Caco-2 (cell line): ENCODE measurements at regions of chr11 and their contacts with region 1.

Region 1: DNA sequence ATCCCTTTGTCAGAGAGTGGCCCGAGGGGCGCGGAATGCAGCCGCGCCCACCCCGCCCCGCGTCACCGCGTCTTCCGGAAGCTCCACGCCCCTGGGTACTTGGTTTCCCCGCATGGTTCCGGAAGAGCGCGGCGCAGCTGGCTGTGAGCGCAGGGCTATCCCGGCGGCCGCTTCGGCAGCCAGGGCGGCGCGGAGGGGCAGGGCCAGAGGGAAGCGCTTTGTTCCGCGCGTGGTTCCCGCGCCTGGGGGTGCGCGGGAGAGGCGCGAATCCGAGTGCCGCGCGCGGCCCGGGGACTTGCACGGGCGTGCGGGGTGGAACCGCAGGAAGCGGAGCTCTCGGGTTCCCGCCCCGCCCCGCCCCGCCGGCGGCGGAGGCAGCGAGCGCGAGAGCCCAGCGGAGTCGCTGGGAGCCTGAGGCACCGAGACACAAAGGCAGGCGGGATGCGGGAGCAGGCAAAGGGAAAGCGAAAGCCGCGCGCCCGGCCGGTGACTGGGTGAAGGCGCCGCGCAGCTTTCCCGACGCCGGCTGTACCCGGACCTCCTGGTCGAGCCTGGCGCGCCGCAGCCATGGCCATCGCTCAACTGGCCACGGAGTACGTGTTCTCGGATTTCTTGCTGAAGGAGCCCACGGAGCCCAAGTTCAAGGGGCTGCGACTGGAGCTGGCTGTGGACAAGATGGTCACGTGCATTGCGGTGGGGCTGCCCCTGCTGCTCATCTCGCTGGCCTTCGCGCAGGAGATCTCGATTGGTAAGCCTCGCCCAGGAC is at the start of gene PANX1:
- DNase-seq: peak; percentile 89 to 93
- H3K4me3 ChIP-seq: peak within 1 kb of the TSS; percentile 70
- H3K4me3 Mint-ChIP-seq: no peak within 1 kb of the TSS
- H3K27ac Mint-ChIP-seq: no peak within 1 kb of the TSS
- H3K4me1 ChIP-seq: peaks cover 18% of the 10 kb centered on the region
- H3K4me1 Mint-ChIP-seq: peaks cover 15% of the 10 kb centered on the region
- H3K27me3 ChIP-seq: no peaks in the 10 kb centered on the region
- H3K27me3 Mint-ChIP-seq: no peaks in the 10 kb centered on the region
- CTCF ChIP-seq: no peak
- total RNA-seq, gene PANX1: 33.1 and 36.6 TPM in 2 replicates

Region 2: DNA sequence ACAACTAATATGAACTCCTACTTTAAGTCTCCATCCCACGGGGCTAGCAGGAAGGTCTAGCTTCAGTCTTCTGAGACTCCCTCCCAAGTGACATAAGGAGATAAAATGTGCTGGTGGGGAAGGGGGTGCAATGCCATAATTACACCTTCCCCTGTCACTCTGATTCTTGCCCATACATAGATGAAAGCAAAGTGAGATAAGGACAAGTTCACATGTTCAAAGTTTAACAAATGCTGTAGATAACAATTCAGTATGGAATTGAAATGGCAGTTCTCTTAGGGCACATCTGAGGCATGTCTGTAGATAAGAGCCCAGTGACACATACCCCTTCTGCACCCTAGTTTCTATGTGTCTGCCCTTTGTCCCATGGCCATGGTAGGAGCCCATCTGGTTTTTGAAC is 38.5 kb before region 1 on chr11:
- CTCF ChIA-PET with region 1: no interaction called
- POLR2A ChIA-PET with region 1: no interaction called
- intact Hi-C with region 1: loop called (anchors 2 kb)
- DNase-seq: peak; percentile 44 to 76
- H3K4me3 ChIP-seq: no peak overlapping the region
- H3K4me3 Mint-ChIP-seq: no peak overlapping the region
- H3K27ac Mint-ChIP-seq: peak overlapping the region; percentile 12
- H3K4me1 ChIP-seq: peaks cover 31% of the 10 kb centered on the region
- H3K4me1 Mint-ChIP-seq: peaks cover 32% of the 10 kb centered on the region
- H3K27me3 ChIP-seq: no peaks in the 10 kb centered on the region
- H3K27me3 Mint-ChIP-seq: no peaks in the 10 kb centered on the region
- CTCF ChIP-seq: no peak

Region 3: DNA sequence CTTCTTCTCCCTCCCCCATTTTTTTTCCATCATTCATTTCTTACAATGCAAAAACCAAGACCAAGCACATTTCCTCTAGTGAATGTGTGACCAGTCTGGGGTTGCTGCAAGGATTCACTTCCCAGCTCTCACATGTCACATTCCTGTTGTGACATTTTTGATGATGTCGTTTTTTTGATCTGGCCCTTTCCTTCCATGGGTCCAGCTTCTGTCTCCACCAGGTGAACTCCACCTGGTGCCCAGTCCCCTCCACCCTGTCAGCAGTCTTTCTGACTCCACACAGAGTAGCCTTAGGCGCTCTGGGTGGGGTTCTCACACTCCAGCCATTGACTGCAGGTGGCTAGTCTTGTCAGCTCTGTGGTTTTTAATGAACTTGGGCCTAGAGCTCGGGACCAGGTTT is 15.3 kb after region 1 on chr11:
- CTCF ChIA-PET with region 1: interaction called, 5 read pairs
- POLR2A ChIA-PET with region 1: interaction called, 12 read pairs
- intact Hi-C with region 1: no loop called
- DNase-seq: peak in 1 of 2 experiments; percentile 29
- H3K4me3 ChIP-seq: no peak overlapping the region
- H3K4me3 Mint-ChIP-seq: no peak overlapping the region
- H3K27ac Mint-ChIP-seq: no peak overlapping the region
- H3K4me1 ChIP-seq: 0 out of 2 replicates have a peak, but pooled peaks cover 5% of the 10 kb centered on the region
- H3K4me1 Mint-ChIP-seq: peaks cover 8% of the 10 kb centered on the region
- H3K27me3 ChIP-seq: no peaks in the 10 kb centered on the region
- H3K27me3 Mint-ChIP-seq: no peaks in the 10 kb centered on the region
- CTCF ChIP-seq: no peak

Region 4: GRCh38 chr11:94151903-94152677 is 23.2 kb after region 1 on chr11:
- CTCF ChIA-PET with region 1: interaction called, 5 read pairs
- POLR2A ChIA-PET with region 1: interaction called, 21 read pairs
- intact Hi-C with region 1: loop called (anchors 1 kb)
- DNase-seq: peak; percentile 36 to 62
- H3K4me3 ChIP-seq: no peak overlapping the region
- H3K4me3 Mint-ChIP-seq: peak overlapping the region; percentile 15
- H3K27ac Mint-ChIP-seq: peak overlapping the region; percentile 77
- H3K4me1 ChIP-seq: peaks cover 46% of the 10 kb centered on the region
- H3K4me1 Mint-ChIP-seq: peaks cover 47% of the 10 kb centered on the region
- H3K27me3 ChIP-seq: no peaks in the 10 kb centered on the region
- H3K27me3 Mint-ChIP-seq: no peaks in the 10 kb centered on the region
- CTCF ChIP-seq: no peak

Region 5: DNA sequence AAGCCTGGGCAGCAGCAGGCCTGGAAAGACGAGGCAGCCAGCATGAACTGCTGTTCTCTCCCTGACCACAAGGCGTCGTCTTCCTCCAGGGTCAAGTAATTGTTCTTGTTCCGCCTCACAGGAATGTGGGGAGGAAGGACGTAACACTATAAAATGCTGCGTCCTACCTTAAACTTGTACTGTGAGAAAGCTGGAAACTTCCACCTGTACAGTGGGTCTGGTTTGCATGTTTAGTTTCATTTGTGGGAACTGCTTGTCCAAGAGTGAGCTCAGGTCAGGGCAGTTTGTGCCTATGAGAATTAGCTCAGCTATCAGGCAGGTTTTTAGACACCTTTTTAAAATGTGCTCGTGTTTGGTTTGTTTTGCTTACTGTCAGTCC is 54.9 kb after region 1 on chr11:
- CTCF ChIA-PET with region 1: interaction called, 3 read pairs
- POLR2A ChIA-PET with region 1: interaction called, 7 read pairs
- intact Hi-C with region 1: loop called (anchors 1 kb)
- DNase-seq: peak; percentile 81 to 87
- H3K4me3 ChIP-seq: no peak overlapping the region
- H3K4me3 Mint-ChIP-seq: no peak overlapping the region
- H3K27ac Mint-ChIP-seq: no peak overlapping the region
- H3K4me1 ChIP-seq: no peaks in the 10 kb centered on the region
- H3K4me1 Mint-ChIP-seq: peaks cover 11% of the 10 kb centered on the region
- H3K27me3 ChIP-seq: no peaks in the 10 kb centered on the region
- H3K27me3 Mint-ChIP-seq: no peaks in the 10 kb centered on the region
- CTCF ChIP-seq: peak; percentile 96 to 97

Region 6: DNA sequence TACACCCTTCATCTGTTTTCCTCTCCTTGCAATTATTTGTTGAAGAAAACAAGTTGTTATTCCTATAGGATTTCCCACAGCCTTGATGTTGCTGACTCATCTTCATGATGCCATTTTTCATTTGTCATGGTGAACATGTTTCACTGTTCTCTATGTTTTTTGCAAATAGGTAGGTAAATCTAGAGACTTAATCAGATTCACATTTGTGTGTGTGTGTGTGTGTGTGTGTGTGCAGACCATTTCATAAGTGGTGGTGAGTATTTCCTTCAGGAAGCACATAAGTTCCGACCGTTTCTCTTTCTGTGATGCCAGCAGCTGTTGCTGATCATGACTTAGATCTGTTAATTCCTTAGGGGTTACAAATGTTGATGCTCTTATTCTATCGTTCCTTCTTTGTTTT is 95.1 kb after region 1 on chr11:
- CTCF ChIA-PET with region 1: no interaction called
- POLR2A ChIA-PET with region 1: no interaction called
- intact Hi-C with region 1: no loop called
- DNase-seq: no peak
- H3K4me3 ChIP-seq: no peak overlapping the region
- H3K4me3 Mint-ChIP-seq: no peak overlapping the region
- H3K27ac Mint-ChIP-seq: no peak overlapping the region
- H3K4me1 ChIP-seq: no peaks in the 10 kb centered on the region
- H3K4me1 Mint-ChIP-seq: no peaks in the 10 kb centered on the region
- H3K27me3 ChIP-seq: no peaks in the 10 kb centered on the region
- H3K27me3 Mint-ChIP-seq: peaks cover 2% of the 10 kb centered on the region
- CTCF ChIP-seq: no peak

Region 7: DNA sequence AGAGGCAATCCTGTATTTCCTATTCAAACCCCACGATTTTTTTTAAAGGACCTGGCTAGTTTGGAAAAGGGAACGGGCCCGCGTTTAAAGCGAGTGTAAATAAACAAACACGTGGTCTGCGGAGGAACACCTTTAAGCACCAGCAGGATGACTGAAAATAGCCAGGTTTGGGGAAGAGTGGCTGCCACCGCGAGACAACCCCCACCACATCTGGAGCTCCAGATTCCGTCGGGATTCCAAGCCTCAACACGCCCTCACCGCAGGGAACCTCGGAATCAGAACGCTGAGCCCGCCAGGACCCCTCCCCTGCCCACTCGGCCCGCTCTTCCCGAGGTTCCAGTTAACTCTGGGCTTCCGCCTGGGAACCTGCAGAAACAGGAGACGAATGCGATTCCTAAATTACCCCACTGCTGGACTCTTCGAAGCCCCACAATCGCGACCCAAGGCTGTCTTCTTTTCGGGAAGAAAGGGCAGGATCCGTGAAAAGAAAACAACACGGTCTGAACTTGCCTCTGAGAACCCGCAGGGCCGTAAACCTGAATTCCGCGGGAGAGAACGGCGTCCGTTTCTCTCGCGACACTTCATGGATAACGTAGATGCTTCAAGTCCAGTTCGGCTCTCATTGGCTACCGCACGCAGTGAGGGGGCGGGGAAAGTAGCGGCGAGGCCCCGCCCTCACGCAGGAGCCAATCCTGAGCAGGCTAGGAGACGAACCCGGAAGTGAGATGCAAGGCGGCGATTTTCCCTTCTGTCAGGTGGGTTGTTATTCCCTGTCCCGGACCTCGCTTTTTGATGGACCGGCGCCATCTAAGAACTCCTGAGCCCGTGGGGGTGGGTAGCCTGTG is 364.6 kb after region 1 on chr11 and contains the starts of genes ANKRD49 and MRE11:
- CTCF ChIA-PET with region 1: no interaction called
- POLR2A ChIA-PET with region 1: interaction called, 4 read pairs
- intact Hi-C with region 1: loop called (anchors 5 kb)
- DNase-seq: peak; percentile 100
- H3K4me3 ChIP-seq: peak within 1 kb of the TSS; percentile 59
- H3K4me3 Mint-ChIP-seq: peak within 1 kb of the TSS; percentile 97
- H3K27ac Mint-ChIP-seq: peak within 1 kb of the TSS; percentile 98
- H3K4me1 ChIP-seq: peaks cover 20% of the 10 kb centered on the region
- H3K4me1 Mint-ChIP-seq: peaks cover 14% of the 10 kb centered on the region
- H3K27me3 ChIP-seq: no peaks in the 10 kb centered on the region
- H3K27me3 Mint-ChIP-seq: no peaks in the 10 kb centered on the region
- CTCF ChIP-seq: no peak
- total RNA-seq, gene ANKRD49: 27.5 and 29.2 TPM in 2 replicates
- total RNA-seq, gene MRE11: 64.8 and 80.0 TPM in 2 replicates